ENCODE measurements at regions of chr19 and their contacts with region 1.

Region 1: DNA sequence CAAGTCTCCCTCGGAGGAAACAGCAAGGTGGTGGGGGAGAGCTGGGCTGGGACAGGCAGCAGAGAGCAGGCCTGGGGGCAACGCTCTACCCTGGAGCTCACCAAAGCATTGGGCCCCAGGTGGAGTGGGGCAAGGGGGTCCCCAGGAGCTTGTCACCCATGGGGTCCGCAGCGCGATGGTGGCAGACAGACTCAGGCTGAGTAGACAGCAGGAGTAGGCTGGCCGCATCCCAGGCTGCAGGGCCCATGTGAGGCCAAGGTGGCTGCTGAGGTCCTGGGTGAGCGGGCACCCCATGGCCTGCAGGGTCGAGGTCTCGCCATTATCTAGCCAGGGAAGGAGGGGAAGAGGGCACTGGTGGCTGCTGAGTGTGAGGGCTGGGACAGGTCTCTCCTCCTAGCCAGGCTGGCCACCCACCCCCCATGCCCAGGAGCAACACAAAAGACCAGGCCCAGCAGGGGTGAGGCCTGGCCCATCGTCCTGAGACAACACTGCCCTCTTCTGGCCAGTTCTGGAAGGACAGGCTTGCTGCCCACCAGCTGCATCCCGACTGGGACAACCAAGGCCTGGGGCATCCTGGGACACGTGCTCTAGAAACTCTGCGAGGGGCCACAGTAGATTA is 33.1 kb downstream of the CEBPG start:
- DNase-seq: peak; percentile 67 to 81
- H3K4me3 ChIP-seq: no peak overlapping the region
- H3K27ac ChIP-seq: no peak overlapping the region
- H3K4me1 ChIP-seq: no peaks in the 10 kb centered on the region
- H3K27me3 ChIP-seq: no peaks in the 10 kb centered on the region
- CTCF ChIP-seq: peak; percentile 92 to 96

Region 2: DNA sequence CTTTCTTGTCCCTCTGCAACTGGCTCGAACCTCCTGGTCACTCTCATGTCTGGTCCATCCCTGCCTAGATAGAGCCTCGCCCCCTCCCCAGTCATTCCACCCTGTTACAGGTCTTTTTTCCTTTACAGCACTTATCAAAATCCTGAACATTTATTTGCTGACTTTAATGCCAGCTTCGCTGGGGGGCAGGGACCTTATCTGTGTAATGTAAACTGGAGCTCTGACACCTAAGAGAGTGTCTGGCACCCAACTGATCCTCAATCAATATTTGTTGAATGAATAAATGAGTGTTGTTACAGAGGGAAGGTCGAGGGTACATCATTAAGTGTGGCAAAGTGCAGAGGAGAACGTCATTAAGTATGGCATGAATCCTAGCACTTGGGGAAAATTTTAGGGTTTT is 417.9 kb before region 1 on chr19:
- intact Hi-C with region 1: no loop called
- DNase-seq: no peak
- H3K4me3 ChIP-seq: no peak overlapping the region
- H3K27ac ChIP-seq: no peak overlapping the region
- H3K4me1 ChIP-seq: no peaks in the 10 kb centered on the region
- H3K27me3 ChIP-seq: no peaks in the 10 kb centered on the region
- CTCF ChIP-seq: no peak

Region 3: GRCh38 chr19:33235269-33235995 is 171.2 kb before region 1 on chr19:
- intact Hi-C with region 1: loop called (anchors 2 kb)
- DNase-seq: peak; percentile 83 to 84
- H3K4me3 ChIP-seq: no peak overlapping the region
- H3K27ac ChIP-seq: no peak overlapping the region
- H3K4me1 ChIP-seq: peaks cover 0 to 4% (median 0%) of the 10 kb centered on the region in 4 donors
- H3K27me3 ChIP-seq: peaks cover 0 to 43% of the 10 kb centered on the region in 2 donors
- CTCF ChIP-seq: peak; percentile 82 to 83

Region 4: GRCh38 chr19:33241530-33242101 is 165.0 kb before region 1 on chr19:
- intact Hi-C with region 1: loop called (anchors 2 kb)
- DNase-seq: no peak
- H3K4me3 ChIP-seq: no peak overlapping the region
- H3K27ac ChIP-seq: no peak overlapping the region
- H3K4me1 ChIP-seq: peaks cover 0 to 13% (median 5%) of the 10 kb centered on the region in 4 donors
- H3K27me3 ChIP-seq: peaks cover 0 to 29% of the 10 kb centered on the region in 2 donors
- CTCF ChIP-seq: peak; percentile 62 to 71

Region 5: DNA sequence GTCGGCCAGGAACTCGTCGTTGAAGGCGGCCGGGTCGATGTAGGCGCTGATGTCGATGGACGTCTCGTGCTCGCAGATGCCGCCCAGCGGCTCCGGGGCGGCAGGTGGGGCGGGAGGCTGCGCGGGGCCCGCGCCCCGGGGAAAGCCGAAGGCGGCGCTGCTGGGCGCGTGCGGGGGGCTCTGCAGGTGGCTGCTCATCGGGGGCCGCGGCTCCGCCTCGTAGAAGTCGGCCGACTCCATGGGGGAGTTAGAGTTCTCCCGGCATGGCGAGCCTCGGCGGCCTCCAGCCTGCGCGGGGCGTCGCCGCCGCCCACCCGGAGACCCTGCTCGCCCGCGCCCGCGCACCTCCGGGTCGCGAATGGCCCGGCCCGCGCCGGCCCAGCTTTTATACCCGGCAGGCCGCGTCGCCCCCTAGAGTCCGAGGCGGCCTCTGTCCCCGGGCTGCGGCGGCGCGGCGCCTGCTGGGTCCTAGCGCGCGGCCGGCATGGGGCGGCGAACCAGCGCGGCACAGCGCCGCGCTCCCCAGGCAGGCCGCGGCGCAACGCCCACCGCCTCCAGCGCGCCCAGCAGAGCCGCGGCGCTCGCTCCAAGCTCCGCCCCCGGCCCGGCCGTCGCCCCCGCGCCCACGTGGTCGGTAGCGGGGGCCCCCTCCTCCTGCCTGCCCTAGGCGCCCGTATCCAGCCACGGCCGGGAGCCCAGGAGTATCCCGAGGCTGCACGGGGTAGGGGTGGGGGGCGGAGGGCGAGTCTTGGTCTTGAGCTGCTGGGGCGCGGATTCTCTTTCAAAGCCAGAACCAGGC is 104.3 kb before region 1 on chr19 and contains the start of gene CEBPA:
- intact Hi-C with region 1: loop called (anchors 10 kb)
- DNase-seq: peak; percentile 61 to 81
- H3K4me3 ChIP-seq: peak within 1 kb of the TSS; percentile 60 to 68
- H3K27ac ChIP-seq: peak within 1 kb of the TSS; percentile 54 to 68
- H3K4me1 ChIP-seq: peaks cover 0 to 53% (median 38%) of the 10 kb centered on the region in 4 donors
- H3K27me3 ChIP-seq: peaks cover 0 to 40% of the 10 kb centered on the region in 2 donors
- CTCF ChIP-seq: peak; percentile 10 to 62

Region 6: GRCh38 chr19:33368074-33368864 is 38.4 kb before region 1 on chr19:
- intact Hi-C with region 1: no loop called
- DNase-seq: no peak
- H3K4me3 ChIP-seq: no peak overlapping the region
- H3K27ac ChIP-seq: no peak overlapping the region
- H3K4me1 ChIP-seq: peaks cover 0 to 4% (median 2%) of the 10 kb centered on the region in 4 donors
- H3K27me3 ChIP-seq: no peaks in the 10 kb centered on the region
- CTCF ChIP-seq: no peak